ENCODE measurements at regions of chr1 and their contacts with region 1.

Region 1: GRCh38 chr1:23216771-23217420 is 406 bp downstream of the HTR1D start:
- DNase-seq: peak; percentile 16
- H3K4me3 Mint-ChIP-seq: peak overlapping the region; percentile 65
- H3K27ac Mint-ChIP-seq: no peak overlapping the region
- H3K4me1 Mint-ChIP-seq: no peaks in the 10 kb centered on the region
- H3K27me3 Mint-ChIP-seq: peaks cover 11% of the 10 kb centered on the region
- CTCF ChIP-seq: peak; percentile 76

Region 2: DNA sequence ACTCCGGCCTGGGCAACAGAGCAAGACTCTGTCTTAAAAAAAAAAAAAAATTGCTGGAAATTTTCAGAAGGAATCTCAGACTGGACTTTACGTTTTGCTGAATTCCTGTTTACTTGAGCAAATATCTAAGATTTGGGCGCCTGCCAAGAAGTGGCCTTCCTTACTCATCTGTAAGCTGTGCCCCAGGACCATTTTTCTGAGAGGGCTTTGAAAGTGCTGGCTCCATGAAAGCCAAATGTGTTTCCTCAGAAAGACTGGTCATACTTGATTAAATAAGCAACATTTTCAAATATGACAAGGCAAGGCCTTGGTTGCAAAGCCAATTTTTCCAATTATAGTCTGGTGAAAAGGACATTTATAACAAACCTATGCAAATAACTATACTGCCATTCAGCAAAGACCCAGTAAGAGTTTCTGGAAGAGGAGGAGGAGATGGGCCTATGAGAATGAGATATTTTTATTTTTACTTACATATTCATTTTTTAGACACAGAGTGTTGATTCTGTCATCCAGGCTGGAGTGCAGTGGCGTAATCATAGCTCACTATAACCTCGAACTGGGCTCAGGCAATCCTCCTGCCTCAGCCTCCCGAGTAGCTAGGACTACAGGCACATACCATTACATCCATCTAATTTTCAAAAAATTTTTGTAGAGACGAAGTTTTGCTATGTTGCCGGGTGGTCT is 56.7 kb after region 1 on chr1:
- CTCF ChIA-PET with region 1: interaction called, 3 read pairs
- POLR2A ChIA-PET with region 1: no interaction called
- intact Hi-C with region 1: loop called (anchors 10 kb)
- DNase-seq: peak; percentile 82
- H3K4me3 Mint-ChIP-seq: no peak overlapping the region
- H3K27ac Mint-ChIP-seq: no peak overlapping the region
- H3K4me1 Mint-ChIP-seq: peaks cover 17% of the 10 kb centered on the region
- H3K27me3 Mint-ChIP-seq: no peaks in the 10 kb centered on the region
- CTCF ChIP-seq: no peak

Measured in MCF 10A (cell line).